ENCODE measurements at regions of chr2 and their contacts with region 1.

Region 1: GRCh38 chr2:240524963-240525718 is 32.6 kb downstream of the ANKMY1 start:
- DNase-seq: no peak
- H3K4me3 ChIP-seq: no peak overlapping the region; a peak in 1 of 4 replicates
- H3K27ac ChIP-seq: no peak overlapping the region
- H3K4me1 ChIP-seq: no peaks in the 10 kb centered on the region
- H3K27me3 ChIP-seq: no peaks in the 10 kb centered on the region
- CTCF ChIP-seq: no peak
- EP300 ChIP-seq: no peak
- RAD21 ChIP-seq: no peak

Region 2: GRCh38 chr2:240513549-240514287 is 11.4 kb before region 1 on chr2:
- CTCF ChIA-PET with region 1: interaction called, 10 read pairs
- POLR2A ChIA-PET with region 1: no interaction called
- DNase-seq: peak; percentile 87
- H3K4me3 ChIP-seq: no peak overlapping the region
- H3K27ac ChIP-seq: no peak overlapping the region
- H3K4me1 ChIP-seq: no peaks in the 10 kb centered on the region; a peak in 1 of 4 replicates
- H3K27me3 ChIP-seq: no peaks in the 10 kb centered on the region
- CTCF ChIP-seq: peak; percentile 55
- EP300 ChIP-seq: no peak
- RAD21 ChIP-seq: peak; percentile 72

Measured in SK-N-SH (cell line).